Stomach (tissue), 19 donors: ENCODE measurements at regions of chr22 and their contacts with region 1.

Region 1: GRCh38 chr22:26267851-26268250 is 98.6 kb downstream of the SEZ6L start:
- DNase-seq: no peak
- H3K4me3 ChIP-seq: no peak overlapping the region
- H3K27ac ChIP-seq: no peak overlapping the region
- H3K4me1 ChIP-seq: no peaks in the 10 kb centered on the region
- H3K27me3 ChIP-seq: peaks cover 3 to 57% (median 6%) of the 10 kb centered on the region in 3 donors
- CTCF ChIP-seq: no peak
- EP300 ChIP-seq: no peak
- POLR2A ChIP-seq: no peak

Region 2: DNA sequence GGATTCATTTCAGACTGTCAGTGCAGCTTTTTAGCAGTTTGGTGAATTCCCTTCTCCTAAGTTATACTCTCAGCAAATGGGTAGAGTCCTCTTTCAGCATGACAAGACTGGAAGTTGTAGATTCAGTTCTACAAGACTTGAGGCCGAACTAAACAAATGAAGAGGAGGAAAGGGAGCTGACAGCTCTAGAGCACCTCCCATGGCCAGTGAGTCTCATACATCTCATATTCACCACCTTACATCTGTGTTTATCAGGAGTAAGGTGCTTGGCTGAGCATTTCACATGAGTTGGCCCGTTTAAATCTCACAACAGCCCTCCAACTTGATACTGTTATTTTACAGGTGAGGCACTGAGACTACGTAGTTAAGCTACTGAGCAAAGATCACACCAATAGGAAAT is 68.2 kb before region 1 on chr22:
- intact Hi-C with region 1: loop called (anchors 10 kb)
- DNase-seq: no peak
- H3K4me3 ChIP-seq: no peak overlapping the region
- H3K27ac ChIP-seq: no peak overlapping the region
- H3K4me1 ChIP-seq: no peaks in the 10 kb centered on the region
- H3K27me3 ChIP-seq: peaks cover 0 to 46% (median 0%) of the 10 kb centered on the region in 3 donors
- CTCF ChIP-seq: no peak
- EP300 ChIP-seq: no peak
- POLR2A ChIP-seq: no peak